ENCODE measurements at regions of chr9 and their contacts with region 1.

Region 1: DNA sequence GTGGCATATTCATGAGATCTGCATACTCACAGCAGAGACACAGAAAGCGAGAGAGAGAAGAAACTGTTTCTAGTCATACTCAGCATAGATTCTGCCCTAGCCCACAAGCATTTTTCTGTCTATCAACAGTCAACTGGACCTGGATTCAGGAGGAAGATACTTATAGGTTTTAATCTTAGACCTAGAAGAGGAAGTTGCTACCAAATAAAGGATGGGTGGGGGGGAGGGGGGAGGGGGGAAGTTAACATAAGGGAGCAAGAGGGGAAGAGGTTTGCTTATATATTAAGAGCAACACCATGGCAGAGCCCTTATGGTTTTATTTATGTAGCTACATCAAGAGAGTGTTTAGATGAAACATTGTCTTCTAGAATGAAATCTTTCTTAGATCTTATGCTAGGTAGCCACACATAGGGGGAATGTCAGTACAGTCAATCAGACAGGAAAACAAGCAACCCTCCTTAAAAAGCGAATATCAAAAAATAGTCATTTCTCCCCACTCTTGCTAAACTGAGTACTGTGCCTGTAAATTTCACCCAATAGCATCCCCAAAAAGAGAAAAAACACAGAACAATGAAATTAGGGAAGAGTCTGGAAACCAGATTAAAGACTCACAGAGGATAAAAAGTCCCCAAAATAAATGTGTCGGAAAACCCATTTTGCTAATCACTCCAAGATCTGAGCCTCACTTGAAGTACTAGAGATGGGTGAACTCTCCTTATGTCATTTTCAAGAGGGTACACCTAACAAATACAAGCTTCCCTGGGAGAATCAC is 192.7 kb upstream of the NR4A3 start:
- DNase-seq: no peak
- H3K4me3 Mint-ChIP-seq: no peak overlapping the region
- H3K27ac Mint-ChIP-seq: no peak overlapping the region
- H3K4me1 Mint-ChIP-seq: no peaks in the 10 kb centered on the region
- H3K27me3 Mint-ChIP-seq: peaks cover 4% of the 10 kb centered on the region

Region 2: GRCh38 chr9:100190339-100190738 is 561.3 kb after region 1 on chr9:
- intact Hi-C with region 1: loop called (anchors 5 kb)
- DNase-seq: no peak
- H3K4me3 Mint-ChIP-seq: no peak overlapping the region
- H3K27ac Mint-ChIP-seq: no peak overlapping the region
- H3K4me1 Mint-ChIP-seq: no peaks in the 10 kb centered on the region
- H3K27me3 Mint-ChIP-seq: no peaks in the 10 kb centered on the region

Measured in activated T-helper 1 cell treated with anti-CD3 and anti-CD28 coated beads, Interleukin-12 subunit alpha, Interleukin-12 subunit beta, Interleukin-2, Interleukin-4 antibody, amounts not matched to agents 30 ng/mL and 10 ng/mL and 1 ng/mL, durations not matched to agents 14 hours and 24 hours and 36 hours (primary cell).